ENCODE measurements at regions of chr9 and their contacts with region 1.

Region 1: DNA sequence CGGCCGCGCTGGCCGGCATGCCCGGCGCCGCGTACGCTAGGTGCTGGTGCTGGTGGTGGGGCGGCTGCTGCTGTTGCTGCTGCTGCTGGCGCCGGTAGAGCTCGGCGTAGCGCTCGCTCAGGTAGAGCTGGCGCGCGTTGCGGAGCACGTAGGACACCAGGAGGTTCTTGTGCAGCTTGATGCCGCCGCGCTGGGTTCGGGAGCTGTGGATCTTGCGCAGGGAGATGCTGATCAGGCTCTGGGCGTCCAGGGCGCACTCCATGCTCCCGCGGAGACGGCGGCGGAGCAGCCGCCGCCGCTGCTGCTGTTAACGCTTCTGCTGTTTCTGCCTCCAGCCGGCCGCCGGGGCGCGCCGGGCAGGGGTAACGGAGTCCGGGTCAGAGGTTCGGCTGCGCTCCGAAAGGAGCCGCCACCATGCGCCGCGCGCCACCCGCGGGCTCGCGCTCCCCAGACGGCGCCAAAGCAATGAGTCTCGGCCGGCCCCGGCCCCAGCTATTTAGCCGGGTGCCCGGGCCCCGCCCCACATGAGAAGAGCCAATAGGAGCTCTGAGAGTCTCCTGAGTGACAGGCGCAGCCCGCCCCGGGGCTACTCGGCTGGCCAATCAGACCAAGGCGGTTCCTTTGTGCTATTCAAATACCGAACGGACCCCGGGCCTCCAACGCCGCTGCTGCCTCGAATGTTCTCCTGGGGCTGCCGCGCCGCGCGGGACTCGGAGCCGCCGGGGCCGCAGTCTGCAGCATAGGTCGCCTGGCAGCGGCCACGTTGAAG is at the start of gene IER5L:
- DNase-seq: peak; percentile 94
- ATAC-seq: peak; percentile 80 to 91 (median 84)
- H3K4me3 ChIP-seq: peak within 1 kb of the TSS; percentile 72 to 100 (median 96)
- H3K27ac ChIP-seq: peak within 1 kb of the TSS; percentile 96 to 100 (median 98)
- H3K4me1 ChIP-seq: peaks cover 11 to 40% (median 29%) of the 10 kb centered on the region in 9 donors
- H3K27me3 ChIP-seq: peaks cover 0 to 6% (median 0%) of the 10 kb centered on the region in 7 donors
- CTCF ChIP-seq: peak in 3 of 9 donors; percentile 7 to 11 (median 10)
- total RNA-seq, gene IER5L: 1.2 to 13.7 (median 5.6) TPM

Region 2: DNA sequence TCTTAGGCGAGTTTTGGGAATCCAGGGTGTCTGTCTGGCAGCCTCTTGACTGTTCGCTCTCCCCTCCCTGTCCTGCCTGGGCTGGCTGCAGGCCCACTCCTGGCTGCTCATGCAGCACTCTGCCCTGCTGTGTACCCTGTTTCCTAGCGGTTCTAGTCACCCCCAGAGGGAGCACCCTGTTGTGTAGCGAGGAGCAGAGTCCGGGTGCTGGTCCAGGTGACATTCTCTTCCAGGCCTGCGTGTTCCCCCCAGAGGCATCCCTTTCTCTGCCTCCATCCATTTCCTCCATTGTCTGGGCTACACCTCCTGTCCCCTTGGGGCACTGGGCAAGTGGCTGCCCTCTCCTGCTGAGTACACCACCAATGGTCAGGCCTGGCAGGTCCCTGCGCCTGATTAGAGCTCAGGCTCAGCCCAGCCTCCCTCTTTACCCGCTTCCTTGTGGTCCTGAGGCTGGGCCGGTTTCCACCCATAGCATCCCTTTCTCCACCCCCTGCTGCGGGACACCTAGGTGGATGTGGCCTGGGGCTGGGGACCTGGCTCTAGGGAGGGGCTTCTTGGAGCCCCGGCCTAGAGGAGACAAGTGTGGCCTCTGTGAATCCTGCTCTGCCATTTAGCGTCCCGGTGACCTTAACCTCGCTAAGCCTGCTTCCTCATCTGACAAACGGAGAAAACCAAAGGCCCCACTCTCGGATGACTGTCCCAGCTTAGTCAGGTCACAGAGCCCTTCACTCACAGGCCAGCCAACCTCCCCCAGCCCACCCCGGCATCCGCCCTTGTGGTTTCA is 84.4 kb before region 1 on chr9:
- intact Hi-C with region 1: no loop called
- DNase-seq: no peak
- ATAC-seq: peak in 4 of 8 donors; percentile 8 to 15 (median 10)
- H3K4me3 ChIP-seq: no peak overlapping the region
- H3K27ac ChIP-seq: peak overlapping the region in 3 of 10 donors; percentile 35 to 53 (median 35)
- H3K4me1 ChIP-seq: peaks cover 0 to 10% (median 0%) of the 10 kb centered on the region in 9 donors
- H3K27me3 ChIP-seq: no peaks in the 10 kb centered on the region
- CTCF ChIP-seq: no peak

Region 3: GRCh38 chr9:129139993-129140396 is 38.0 kb before region 1 on chr9:
- intact Hi-C with region 1: loop called in 7 of 10 experiments (anchors 1 to 5 kb)
- DNase-seq: peak; percentile 89 to 99
- ATAC-seq: peak; percentile 69 to 84 (median 77)
- H3K4me3 ChIP-seq: peak overlapping the region; percentile 37 to 62 (median 54)
- H3K27ac ChIP-seq: peak overlapping the region; percentile 100
- H3K4me1 ChIP-seq: peaks cover 49 to 79% (median 71%) of the 10 kb centered on the region in 9 donors
- H3K27me3 ChIP-seq: no peaks in the 10 kb centered on the region
- CTCF ChIP-seq: no peak

Region 4: DNA sequence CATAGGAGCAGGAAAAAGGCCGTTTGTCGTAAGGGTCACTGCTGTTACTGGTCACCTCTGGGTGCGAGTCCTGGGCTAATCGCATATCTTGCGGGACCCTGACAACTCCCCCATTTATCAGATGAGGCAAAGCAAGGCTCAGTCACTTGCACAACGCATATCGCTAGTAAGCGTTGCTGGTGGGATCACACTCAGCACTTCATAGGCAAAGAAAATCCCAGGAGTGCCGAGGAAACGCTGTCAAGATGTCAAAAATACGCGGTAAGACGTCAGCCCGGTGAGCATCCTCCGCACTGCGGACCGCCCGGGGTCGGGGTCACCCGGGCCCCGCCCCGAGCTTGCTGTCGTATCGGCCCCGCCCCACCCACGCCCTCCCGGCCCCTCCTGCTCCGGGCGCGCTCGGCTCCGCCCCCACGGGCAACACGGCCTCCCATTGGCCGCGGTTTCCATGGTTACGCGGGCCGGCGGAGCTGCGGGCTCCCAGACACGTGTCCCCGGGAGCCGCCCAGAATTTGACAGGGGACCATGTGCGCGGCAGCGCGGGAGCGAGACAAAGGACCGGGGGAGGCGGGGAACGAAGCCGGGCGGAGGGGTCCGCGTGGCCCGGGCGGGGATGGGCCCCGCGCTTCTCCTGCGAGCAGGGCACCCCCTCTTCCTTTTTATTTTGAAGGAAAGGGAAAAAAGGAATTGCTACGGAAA is 80.3 kb after region 1 on chr9:
- intact Hi-C with region 1: loop called in 6 of 10 experiments (anchors 2 to 5 kb)
- DNase-seq: peak; percentile 91 to 94
- ATAC-seq: peak; percentile 70 to 85 (median 80)
- H3K4me3 ChIP-seq: peak overlapping the region in 8 of 10 donors; percentile 5 to 46 (median 34)
- H3K27ac ChIP-seq: peak overlapping the region in 6 of 10 donors; percentile 9 to 59 (median 51)
- H3K4me1 ChIP-seq: peaks cover 5 to 53% (median 36%) of the 10 kb centered on the region in 9 donors
- H3K27me3 ChIP-seq: peaks cover 0 to 19% (median 0%) of the 10 kb centered on the region in 7 donors
- CTCF ChIP-seq: no peak

Region 5: DNA sequence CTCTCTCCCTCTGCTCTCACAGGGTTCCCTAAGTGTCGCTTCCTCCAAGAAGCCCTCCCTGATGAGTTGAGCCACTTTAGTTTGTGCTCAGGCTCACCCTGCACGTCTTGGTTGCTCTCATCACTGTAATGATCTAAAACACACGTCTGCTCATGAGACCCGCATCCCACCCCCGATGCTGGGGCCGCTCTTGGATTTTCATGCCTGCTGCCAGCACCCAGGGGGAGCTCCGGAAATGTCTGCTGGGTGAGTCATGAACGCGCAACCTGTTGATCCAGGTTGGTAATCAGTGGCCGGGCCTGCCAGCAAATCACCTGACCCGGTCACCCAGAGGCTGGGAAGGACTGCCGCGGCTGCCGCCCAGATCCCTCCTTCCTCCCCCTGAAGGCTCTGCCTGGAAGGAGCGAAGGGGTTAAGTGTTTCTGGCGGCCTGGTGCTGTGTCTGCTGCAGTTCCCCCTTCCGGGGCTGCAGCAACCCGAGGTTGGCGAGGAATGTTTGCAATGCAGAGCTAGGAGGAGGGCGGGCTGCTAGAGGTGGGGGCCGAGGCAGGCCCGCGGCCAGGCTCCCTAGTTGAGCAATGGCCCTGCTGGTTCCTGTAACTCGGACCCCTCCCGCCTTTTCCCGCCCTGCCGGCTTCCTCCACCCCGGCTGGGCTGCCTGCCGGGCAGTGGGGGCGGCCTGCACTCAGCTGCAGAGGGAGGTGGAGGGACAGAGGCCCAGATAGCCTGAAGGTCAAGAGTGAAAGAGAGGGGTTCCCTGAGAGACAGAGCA is 156.2 kb after region 1 on chr9:
- intact Hi-C with region 1: loop called in 3 of 10 experiments (anchors 5 kb)
- DNase-seq: peak; percentile 88 to 89
- ATAC-seq: peak; percentile 87 to 95 (median 91)
- H3K4me3 ChIP-seq: peak overlapping the region in 8 of 10 donors; percentile 2 to 39 (median 29)
- H3K27ac ChIP-seq: peak overlapping the region; percentile 69 to 96 (median 88)
- H3K4me1 ChIP-seq: peaks cover 19 to 60% (median 53%) of the 10 kb centered on the region in 9 donors
- H3K27me3 ChIP-seq: no peaks in the 10 kb centered on the region
- CTCF ChIP-seq: peak in 4 of 9 donors; percentile 7 to 22 (median 11)

Region 6: GRCh38 chr9:129413537-129414376 is 235.8 kb after region 1 on chr9:
- intact Hi-C with region 1: loop called in 3 of 10 experiments (anchors 5 kb)
- DNase-seq: peak; percentile 99 to 100
- ATAC-seq: peak; percentile 85 to 92 (median 88)
- H3K4me3 ChIP-seq: peak overlapping the region; percentile 47 to 74 (median 61)
- H3K27ac ChIP-seq: peak overlapping the region; percentile 97 to 100 (median 100)
- H3K4me1 ChIP-seq: peaks cover 18 to 53% (median 31%) of the 10 kb centered on the region in 9 donors
- H3K27me3 ChIP-seq: no peaks in the 10 kb centered on the region
- CTCF ChIP-seq: no peak

Region 7: DNA sequence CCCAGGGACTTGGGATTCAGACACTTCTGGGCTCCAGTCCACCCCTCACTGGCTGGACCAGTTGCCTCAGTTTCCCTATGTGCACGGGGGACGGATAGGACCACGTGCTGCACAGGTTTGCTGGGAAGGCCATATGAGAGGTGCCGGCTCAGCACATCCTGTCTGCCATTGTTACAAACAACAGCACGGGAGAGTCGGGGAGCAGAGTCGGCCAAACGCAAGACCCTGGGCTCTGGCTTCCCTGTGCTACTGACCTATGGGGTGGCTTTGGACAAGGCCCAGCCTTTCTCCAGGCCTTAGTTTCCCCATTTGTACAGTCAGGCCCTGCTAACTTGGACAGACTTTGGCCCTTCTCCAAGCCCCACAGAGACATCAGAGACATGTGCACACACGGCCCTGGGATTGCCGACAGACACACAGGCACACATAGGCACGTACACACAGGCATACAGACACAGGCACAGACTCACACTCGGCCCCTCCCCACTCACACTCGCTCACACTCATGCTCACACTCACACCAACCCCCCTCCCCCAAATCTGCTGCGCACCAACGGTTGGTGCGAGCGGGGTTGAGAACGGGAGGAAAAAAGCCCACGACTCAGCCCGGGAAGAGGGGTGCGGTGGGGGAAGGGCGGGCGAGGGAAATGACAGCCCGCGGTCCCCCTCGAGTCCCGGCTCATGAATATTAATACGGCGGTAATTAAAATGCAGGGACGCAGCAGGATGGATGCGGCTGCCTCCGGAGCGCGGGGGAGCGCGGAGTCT is 309.9 kb after region 1 on chr9:
- intact Hi-C with region 1: loop called in 8 of 10 experiments (anchors 2 to 10 kb)
- DNase-seq: peak; percentile 53 to 65
- ATAC-seq: peak in 5 of 8 donors; percentile 0 to 12 (median 5)
- H3K4me3 ChIP-seq: peak overlapping the region; percentile 44 to 61 (median 56)
- H3K27ac ChIP-seq: peak overlapping the region; percentile 96 to 100 (median 99)
- H3K4me1 ChIP-seq: peaks cover 33 to 94% (median 70%) of the 10 kb centered on the region in 9 donors
- H3K27me3 ChIP-seq: no peaks in the 10 kb centered on the region
- CTCF ChIP-seq: no peak

Region 8: GRCh38 chr9:130866474-130866965 is 1688.5 kb after region 1 on chr9:
- intact Hi-C with region 1: no loop called
- DNase-seq: peak in 1 of 2 donors; percentile 75
- ATAC-seq: peak in 5 of 8 donors; percentile 43 to 56 (median 47)
- H3K4me3 ChIP-seq: no peak overlapping the region
- H3K27ac ChIP-seq: peak overlapping the region in 1 of 10 donors; percentile 2
- H3K4me1 ChIP-seq: peaks cover 0 to 74% (median 36%) of the 10 kb centered on the region in 9 donors
- H3K27me3 ChIP-seq: no peaks in the 10 kb centered on the region
- CTCF ChIP-seq: peak; percentile 63 to 85 (median 77)